Cardiac septum (tissue), 1 donor: ENCODE measurements at regions of chr5 and their contacts with region 1.

Region 1: DNA sequence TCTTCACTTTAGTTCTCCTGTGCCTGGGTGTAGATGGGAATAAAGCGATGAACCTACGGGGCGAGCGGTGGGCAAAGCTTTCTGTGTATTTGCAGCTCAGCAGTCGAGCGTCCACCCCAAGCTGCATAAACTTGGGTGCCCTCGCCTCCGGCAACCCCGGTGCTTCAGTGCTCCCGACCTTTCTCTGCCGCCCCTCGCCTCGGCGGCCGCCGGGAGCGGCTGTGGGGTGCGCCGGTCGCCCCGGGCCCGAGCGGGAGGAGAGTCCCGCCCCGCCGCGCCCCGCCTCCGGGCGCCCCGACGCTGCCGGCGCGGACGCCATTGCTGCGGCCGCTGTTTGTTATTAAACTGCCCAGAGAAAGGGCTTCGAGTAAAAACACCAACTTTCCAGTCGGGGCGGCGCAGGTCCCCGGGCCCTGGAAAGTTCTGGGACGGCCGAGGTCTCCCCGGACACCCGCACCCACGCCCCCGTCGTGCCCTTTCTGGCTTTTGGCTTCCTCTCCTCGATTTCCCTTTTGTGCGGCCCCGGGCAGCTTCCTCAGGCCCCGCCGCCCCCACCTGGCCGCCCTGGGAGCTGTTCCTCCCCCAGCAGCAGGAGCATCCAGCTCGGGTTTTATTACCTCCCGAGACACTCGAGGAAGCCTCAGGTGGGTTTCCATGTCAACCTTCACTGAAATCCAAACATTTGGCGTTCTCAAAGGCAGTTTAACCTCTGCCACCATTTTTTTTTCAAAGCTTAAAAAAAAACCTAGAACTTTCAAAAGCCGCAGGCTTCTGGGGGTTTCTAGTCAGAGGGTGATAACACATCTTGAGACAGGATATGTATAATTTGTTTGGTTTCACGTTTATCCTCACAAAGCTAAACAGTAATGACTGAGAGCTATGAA is 334.3 kb downstream of the CWC27 start:
- DNase-seq: peak; percentile 84

Region 2: DNA sequence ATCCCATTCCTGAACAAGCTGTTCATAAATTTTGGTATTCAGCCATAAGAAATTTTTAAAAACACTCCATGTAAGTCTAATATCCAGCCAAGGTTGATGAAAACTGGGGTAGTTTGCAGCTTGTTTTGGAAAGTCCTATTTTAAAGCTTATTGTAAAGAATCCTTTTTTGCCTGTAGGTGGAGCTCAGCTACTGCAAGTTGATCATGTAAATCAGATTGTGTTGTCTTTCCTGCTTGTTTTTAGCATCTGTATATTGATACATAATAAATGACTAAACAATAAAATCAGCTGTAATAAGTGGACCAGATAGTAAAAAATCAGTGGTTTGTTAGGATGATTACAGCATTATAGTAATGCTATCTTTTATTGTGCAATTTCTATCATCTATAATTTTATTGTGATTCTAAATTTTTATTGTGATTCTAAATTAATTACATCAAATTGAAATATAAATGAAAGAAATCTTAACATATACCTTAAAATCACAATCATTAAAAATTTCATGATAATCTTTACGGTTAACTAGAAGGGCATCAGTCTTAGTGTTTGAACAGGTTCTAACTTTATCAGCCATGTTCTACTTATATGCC is 291.9 kb before region 1 on chr5:
- intact Hi-C with region 1: loop called (anchors 5 kb)
- DNase-seq: no peak

Region 3: GRCh38 chr5:64958757-64959391 is 144.2 kb before region 1 on chr5:
- intact Hi-C with region 1: loop called (anchors 1 kb)
- DNase-seq: no peak

Region 4: GRCh38 chr5:65035211-65036206 is 67.6 kb before region 1 on chr5:
- intact Hi-C with region 1: loop called (anchors 10 kb)
- DNase-seq: peak; percentile 93

Region 5: DNA sequence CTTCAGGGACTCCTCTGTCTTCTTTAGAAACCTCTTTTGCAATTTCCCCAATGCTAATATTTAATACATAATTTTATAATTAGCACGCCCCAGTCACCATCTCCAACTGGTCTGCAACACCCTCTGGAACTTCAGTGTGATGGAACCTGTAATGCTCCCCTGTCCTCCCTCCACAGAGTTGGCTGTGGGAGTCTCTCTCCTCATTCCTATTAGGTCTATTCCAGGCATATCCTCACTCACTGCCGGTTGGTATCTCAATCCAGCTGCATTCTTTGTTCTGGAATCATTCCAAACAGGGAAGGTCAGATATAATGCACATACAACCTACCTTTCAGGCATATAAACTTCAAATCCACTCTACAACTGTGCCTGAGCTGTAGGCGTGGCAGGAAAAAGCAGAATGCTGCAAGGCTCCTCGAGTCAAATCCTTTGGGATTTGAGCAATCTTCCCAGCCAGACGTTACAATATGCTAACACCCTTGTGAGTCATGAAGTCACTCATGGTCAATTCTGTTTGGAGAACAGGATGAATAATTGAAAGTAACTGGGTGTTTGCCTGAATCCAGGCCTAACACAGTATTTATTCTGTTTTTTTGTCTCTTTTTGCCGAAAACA is 40.5 kb before region 1 on chr5:
- intact Hi-C with region 1: loop called (anchors 5 kb)
- DNase-seq: no peak

Region 6: DNA sequence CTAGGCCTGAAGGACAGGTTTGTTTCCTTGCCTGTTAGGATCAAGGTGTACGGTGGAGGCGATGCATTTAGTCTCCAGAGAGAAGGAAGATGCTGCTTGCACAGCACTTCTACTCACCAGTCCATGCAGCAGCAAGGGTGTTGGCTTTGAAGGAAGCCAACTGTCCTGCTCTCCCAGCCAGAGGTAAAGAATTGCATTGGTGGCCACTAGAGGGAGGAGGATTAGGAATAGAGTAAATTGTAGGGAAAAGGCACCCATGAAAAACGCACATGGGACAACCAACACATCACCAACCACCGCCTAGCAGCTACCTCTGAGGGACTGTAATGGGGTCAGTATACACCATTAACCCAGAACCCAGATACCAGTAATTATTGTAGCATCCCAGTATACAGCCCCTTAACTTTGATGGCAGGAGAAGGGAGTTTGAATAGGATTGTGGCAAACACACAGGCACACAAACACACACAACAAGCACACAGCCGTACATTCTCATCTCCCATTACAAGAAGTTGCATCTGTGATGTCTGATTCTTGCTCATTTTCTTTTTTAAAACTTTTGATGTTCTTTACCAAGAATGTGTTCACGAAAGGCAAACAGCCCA is 111.0 kb after region 1 on chr5:
- intact Hi-C with region 1: no loop called
- DNase-seq: no peak

Region 7: GRCh38 chr5:65562731-65563701 is 459.9 kb after region 1 on chr5 and contains the starts of genes CENPK and PPWD1:
- intact Hi-C with region 1: loop called (anchors 5 kb)
- DNase-seq: peak; percentile 97
- total RNA-seq, gene CENPK: 0.73 TPM
- total RNA-seq, gene PPWD1: 19.3 TPM

Region 8: DNA sequence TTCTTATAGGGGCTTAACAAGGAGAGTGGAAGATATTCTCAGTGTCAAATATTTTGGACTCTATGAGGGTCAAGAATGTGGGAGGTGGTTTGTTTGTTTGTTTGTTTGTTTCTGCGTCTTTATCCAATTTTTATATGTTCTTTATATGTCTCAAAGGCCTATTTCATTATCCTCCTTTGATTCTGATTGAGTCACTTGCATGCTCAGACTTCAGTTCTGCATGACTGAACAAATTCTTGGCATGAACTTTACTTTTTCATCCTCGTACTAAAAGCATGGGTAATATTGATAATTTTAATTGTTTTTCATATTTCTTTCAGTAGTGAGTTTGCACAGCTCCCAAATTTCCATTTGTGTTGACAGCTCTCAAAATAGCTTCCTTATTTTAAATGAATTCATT is 804.1 kb after region 1 on chr5:
- intact Hi-C with region 1: no loop called
- DNase-seq: no peak